ENCODE measurements at regions of chr14 and their contacts with region 1.

Region 1: GRCh38 chr14:34300882-34301734 is 160.9 kb downstream of the SPTSSA start:
- DNase-seq: no peak
- H3K4me3 Mint-ChIP-seq: no peak overlapping the region
- H3K27ac Mint-ChIP-seq: no peak overlapping the region
- H3K4me1 Mint-ChIP-seq: no peaks in the 10 kb centered on the region
- H3K27me3 Mint-ChIP-seq: peaks cover 2% of the 10 kb centered on the region

Region 2: DNA sequence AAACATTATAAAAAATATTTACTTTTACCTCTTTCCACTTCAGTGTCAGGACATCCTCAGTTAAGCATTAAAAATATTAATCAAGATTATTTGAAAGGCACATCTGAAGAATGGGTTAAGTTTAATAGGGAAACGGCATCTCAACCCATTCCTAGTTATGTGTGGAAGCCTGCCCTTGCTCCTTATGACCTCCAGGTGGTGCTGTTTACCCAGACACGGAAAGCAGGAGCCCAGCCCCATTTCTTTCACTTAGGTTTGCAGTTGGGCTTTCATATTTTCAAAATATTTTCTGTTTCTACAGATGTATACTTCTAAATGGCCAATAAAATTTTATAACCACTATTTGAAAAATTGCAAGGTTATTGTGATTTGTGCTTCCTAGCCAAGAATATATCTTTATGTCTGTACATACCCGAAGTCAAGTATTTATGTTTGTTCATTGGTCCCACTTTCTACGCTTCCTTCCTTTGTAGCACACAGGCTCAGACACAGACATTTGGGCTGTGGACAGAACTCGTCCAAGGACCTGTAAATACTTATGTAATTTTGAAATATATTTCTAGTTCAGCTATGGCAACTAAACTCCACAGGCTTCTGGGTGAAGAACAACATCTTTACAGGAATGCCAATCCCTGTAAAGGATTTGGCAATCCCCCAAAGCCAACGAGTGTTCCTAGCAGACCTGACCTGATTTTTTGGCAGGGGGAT is 1724.9 kb before region 1 on chr14:
- intact Hi-C with region 1: loop called (anchors 5 kb)
- DNase-seq: peak; percentile 13
- H3K4me3 Mint-ChIP-seq: no peak overlapping the region
- H3K27ac Mint-ChIP-seq: no peak overlapping the region
- H3K4me1 Mint-ChIP-seq: no peaks in the 10 kb centered on the region
- H3K27me3 Mint-ChIP-seq: peaks cover 20% of the 10 kb centered on the region

Region 3: DNA sequence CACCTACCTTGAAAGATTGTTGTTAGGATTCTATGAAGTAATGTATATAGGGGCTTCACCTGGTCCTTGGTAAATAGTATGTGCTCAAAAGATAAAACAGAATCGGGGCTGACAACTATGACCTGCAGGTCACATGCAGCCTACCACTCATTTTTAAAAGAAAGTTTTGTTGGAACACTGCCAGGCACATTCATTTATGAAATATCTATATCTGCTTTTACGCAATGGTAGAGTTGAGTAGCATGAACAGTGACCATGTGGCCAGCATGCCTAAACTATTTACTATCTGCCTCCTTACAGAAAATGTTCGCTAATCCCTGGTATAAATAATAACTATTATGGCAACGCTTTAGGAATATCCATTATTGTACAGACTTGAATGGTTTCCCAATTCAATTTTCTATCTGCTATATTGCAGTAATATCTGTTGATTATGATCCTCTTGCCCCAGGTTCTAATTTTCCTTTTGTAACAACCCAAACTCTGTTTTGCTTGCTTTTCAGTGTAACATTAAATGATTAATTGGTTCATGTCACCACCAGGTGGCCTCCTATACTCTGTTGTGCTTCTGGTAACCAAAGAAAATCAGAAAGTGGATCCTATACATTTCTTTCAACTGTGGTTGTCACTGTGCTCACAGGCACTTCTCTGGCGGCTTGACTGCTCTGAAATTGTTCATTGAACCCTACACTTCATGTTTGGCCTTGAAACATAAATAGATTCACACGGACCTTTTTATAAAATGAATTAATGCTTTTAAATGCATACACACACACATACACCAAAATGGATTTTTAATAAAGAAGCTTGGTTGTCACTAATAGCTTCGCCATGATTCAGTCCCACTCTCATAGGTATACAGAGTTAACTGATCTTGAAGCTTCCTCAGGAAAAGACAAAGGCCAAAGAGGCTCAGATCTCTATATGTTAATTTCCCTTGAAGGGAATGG is 1590.1 kb before region 1 on chr14:
- intact Hi-C with region 1: loop called (anchors 5 kb)
- DNase-seq: no peak
- H3K4me3 Mint-ChIP-seq: no peak overlapping the region
- H3K27ac Mint-ChIP-seq: no peak overlapping the region
- H3K4me1 Mint-ChIP-seq: no peaks in the 10 kb centered on the region
- H3K27me3 Mint-ChIP-seq: no peaks in the 10 kb centered on the region

Region 4: DNA sequence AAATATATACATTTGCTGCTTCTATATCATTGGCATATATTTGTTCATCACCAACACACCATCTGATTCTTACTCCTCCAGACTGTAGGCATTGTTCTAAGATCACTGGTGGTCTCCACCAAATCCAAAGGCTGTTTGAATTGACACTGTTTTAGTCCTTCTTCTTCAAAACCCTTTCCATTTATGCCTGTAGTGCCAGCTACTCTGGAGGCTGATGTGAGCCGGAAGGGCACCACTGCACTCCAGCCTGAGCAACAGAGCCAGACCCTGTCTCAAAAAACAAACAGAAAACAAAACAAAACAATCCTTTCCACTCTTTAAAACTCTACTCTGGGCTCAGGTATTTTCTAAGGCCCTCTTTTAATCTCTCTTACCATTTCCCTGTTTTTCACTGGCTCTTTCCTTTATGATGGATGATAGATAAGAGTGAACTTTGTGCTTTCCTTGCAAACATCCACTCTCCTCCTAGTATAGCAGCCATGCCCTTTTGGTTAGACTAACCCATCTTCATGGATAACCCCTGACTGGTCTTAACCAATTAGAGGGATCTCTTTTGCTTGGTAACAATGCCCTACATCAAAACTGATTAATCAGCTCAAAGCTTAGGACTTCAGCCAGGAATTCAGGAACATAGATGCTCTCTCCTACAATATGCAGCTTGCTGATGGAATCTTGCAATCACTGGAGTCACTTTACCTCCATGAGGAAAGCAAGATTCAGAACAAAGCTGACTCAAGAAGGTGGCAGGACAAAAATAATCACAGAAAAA is 136.0 kb after region 1 on chr14:
- intact Hi-C with region 1: no loop called
- DNase-seq: no peak
- H3K4me3 Mint-ChIP-seq: no peak overlapping the region
- H3K27ac Mint-ChIP-seq: no peak overlapping the region
- H3K4me1 Mint-ChIP-seq: peaks cover 10% of the 10 kb centered on the region
- H3K27me3 Mint-ChIP-seq: no peaks in the 10 kb centered on the region

Measured in activated T-helper 2 cell treated with anti-CD3 and anti-CD28 coated beads, Interferon-gamma antibody, Interleukin-2, Interleukin-4, amounts not matched to agents 10 μg/mL and 5 μg/mL and 100 μg/mL, durations not matched to agents 14 hours and 24 hours and 36 hours (primary cell).